WTC11 (cell line): ENCODE measurements at regions of chr9 and their contacts with region 1.

Region 1: DNA sequence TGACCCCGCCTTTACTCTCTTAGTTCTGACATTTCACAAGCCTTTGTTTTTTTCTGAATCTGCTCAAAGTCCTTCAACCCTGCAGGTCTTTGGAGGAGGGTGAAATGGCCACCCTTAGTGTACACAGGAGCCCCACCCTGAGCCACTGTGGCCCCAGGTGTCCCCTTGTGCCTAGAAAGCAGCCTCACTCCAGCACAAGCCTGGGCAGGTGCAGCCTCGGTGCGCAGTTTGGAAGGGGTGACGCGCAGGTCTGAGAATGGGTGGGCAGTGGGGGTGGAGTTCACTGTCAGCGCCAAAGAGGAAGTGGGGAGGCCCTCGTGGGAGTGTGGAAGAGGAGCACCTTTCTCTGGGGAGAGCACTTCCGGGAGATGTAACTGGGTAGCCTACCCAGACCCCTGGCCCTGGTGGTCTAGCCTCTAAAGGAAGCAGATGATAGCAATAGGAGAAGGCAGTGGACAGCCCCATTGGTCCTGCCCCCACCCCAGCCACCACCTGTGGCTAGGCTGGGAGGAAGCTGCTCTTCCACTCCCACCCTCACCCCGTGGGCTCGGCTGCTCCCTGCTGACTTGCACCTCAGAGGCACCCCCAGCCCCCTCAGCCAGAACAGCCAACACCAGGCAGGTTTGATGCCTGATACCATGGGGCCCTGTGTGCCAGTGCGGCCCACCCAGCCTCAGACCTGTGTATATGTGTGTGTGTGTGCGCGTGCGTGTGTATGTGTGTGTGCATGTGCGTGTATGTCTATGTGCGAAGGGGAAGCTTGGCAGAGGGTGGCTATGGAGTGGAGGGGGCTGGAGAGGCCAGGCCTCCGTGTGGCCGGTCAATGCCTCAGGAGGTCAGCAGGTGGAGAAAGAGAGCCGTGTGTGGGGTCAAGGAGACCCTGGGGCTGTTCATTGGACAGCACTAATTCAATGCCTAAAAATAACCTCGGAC is 16.8 kb upstream of the DAB2IP start:
- DNase-seq: peak; percentile 70
- ATAC-seq: peak; percentile 88
- H3K4me3 Mint-ChIP-seq: no peak overlapping the region
- H3K27ac Mint-ChIP-seq: peak overlapping the region; percentile 64
- H3K4me1 Mint-ChIP-seq: peaks cover 48% of the 10 kb centered on the region
- H3K27me3 Mint-ChIP-seq: no peaks in the 10 kb centered on the region
- CTCF ChIP-seq: peak; percentile 37

Region 2: DNA sequence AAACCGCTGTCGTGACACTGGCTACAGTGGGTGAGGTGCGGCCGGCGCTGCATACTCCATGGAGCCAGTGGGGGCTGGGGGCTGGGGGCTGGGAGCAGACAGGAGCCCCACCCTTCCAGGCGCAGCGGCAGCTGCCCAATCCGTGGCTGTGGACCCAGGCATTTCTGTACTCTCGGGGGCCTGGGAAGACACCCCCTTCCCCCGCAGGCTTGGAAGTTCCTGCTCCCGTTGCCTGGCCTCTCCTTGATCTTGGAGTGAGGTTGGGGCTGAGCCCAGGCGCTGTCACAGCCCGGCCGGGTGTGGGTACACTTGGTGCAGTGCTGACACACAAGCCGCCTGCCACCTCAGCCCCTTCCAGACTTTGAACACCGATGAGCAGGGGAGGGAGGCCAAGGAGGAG is 107.2 kb before region 1 on chr9:
- CTCF ChIA-PET with region 1: no interaction called
- POLR2A ChIA-PET with region 1: no interaction called
- DNase-seq: no peak
- ATAC-seq: no peak
- H3K4me3 Mint-ChIP-seq: no peak overlapping the region
- H3K27ac Mint-ChIP-seq: no peak overlapping the region
- H3K4me1 Mint-ChIP-seq: no peaks in the 10 kb centered on the region
- H3K27me3 Mint-ChIP-seq: peaks cover 5% of the 10 kb centered on the region; the same call in 1 of the 2 replicates
- CTCF ChIP-seq: no peak

Region 3: GRCh38 chr9:121557581-121558447 is 76.8 kb before region 1 on chr9:
- CTCF ChIA-PET with region 1: interaction called, 10 read pairs
- POLR2A ChIA-PET with region 1: no interaction called
- DNase-seq: peak; percentile 49
- ATAC-seq: peak; percentile 85
- H3K4me3 Mint-ChIP-seq: no peak overlapping the region
- H3K27ac Mint-ChIP-seq: peak overlapping the region; percentile 60; the same call in 1 of the 2 replicates
- H3K4me1 Mint-ChIP-seq: peaks cover 28% of the 10 kb centered on the region
- H3K27me3 Mint-ChIP-seq: no peaks in the 10 kb centered on the region
- CTCF ChIP-seq: no peak

Region 4: GRCh38 chr9:121621113-121621449 is 13.5 kb before region 1 on chr9:
- CTCF ChIA-PET with region 1: interaction called, 29 read pairs
- POLR2A ChIA-PET with region 1: no interaction called
- DNase-seq: peak; percentile 74
- ATAC-seq: peak; percentile 97
- H3K4me3 Mint-ChIP-seq: no peak overlapping the region
- H3K27ac Mint-ChIP-seq: peak overlapping the region; percentile 32
- H3K4me1 Mint-ChIP-seq: peaks cover 20% of the 10 kb centered on the region
- H3K27me3 Mint-ChIP-seq: no peaks in the 10 kb centered on the region
- CTCF ChIP-seq: no peak

Region 5: DNA sequence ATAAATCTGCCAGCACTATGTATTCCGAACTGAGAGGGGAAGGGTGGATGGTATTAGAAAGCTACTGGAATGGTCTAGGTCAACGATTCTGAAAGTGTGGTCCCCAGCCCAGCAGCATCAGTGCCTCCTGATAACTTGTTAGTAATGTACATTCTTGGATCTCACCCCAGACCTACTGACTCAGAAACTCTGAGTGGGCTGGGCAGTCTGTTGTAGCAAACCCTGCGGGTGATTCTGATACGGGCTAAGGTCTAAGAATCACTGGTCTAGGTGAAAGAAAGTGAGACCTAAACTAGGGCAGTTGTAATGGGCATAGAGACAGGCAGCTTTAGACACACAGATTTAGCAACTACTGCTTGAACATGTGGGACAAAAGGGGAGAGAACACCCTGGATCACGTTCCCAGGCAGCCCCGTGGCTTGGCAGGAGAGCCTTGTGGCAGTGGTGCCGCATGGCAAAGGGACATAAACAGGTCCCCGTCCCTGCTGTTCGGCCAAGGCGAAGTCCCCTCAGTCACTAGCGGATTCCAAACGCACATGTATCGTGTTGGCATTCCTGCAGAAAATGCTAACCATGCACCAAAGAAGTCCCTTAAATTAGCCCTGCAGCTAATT is 242.2 kb after region 1 on chr9:
- CTCF ChIA-PET with region 1: no interaction called
- POLR2A ChIA-PET with region 1: no interaction called
- DNase-seq: no peak
- ATAC-seq: no peak
- H3K4me3 Mint-ChIP-seq: no peak overlapping the region
- H3K27ac Mint-ChIP-seq: no peak overlapping the region
- H3K4me1 Mint-ChIP-seq: no peaks in the 10 kb centered on the region
- H3K27me3 Mint-ChIP-seq: no peaks in the 10 kb centered on the region; the same call in 1 of the 2 replicates
- CTCF ChIP-seq: no peak